ENCODE measurements at regions of chr6 and their contacts with region 1.

Region 1: DNA sequence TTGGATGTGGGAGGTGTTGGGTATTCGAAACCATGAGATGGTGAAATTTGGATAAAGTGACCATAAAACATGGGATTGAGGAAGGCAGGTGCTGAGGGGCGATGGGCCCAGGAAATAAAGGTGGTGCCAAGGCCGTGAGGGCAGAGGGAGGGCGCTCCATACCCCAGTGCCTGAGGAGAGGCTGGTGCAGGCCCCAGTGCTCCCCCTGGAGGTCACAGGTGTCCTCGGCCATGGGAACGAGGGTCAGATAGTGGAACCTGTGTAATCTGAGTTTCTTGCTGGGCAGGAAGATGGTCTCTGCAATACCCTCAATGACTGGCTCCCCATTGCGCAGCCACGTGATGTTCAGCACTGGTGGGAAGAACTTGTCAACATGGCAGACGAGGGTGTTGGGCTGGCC is 16.2 kb downstream of the HLA-DPB1 start:
- DNase-seq: peak in 1 of 2 experiments; percentile 15
- ATAC-seq: peak; percentile 66 to 76; a peak in 3 of 6 replicates
- H3K4me3 ChIP-seq: no peak overlapping the region
- H3K27ac ChIP-seq: no peak overlapping the region
- H3K4me1 ChIP-seq: no peaks in the 10 kb centered on the region
- CTCF ChIP-seq: no peak
- EP300 ChIP-seq: no peak
- POLR2A ChIP-seq: no peak
- RAD21 ChIP-seq: peak in 1 of 2 experiments; percentile 17; a peak in 1 of 5 replicates

Region 2: GRCh38 chr6:33105916-33106871 is 14.2 kb after region 1 on chr6:
- CTCF ChIA-PET with region 1: no interaction called
- POLR2A ChIA-PET with region 1: no interaction called
- DNase-seq: no peak
- ATAC-seq: no peak
- H3K4me3 ChIP-seq: no peak overlapping the region
- H3K27ac ChIP-seq: no peak overlapping the region
- H3K4me1 ChIP-seq: no peaks in the 10 kb centered on the region
- CTCF ChIP-seq: no peak
- EP300 ChIP-seq: no peak
- POLR2A ChIP-seq: no peak
- RAD21 ChIP-seq: no peak

Region 3: GRCh38 chr6:33118525-33119123 is 26.7 kb after region 1 on chr6:
- CTCF ChIA-PET with region 1: interaction called, 10 read pairs
- POLR2A ChIA-PET with region 1: no interaction called
- DNase-seq: peak in 1 of 2 experiments; percentile 46
- ATAC-seq: peak in 1 of 2 experiments; percentile 47; a peak in 2 of 6 replicates
- H3K4me3 ChIP-seq: no peak overlapping the region
- H3K27ac ChIP-seq: no peak overlapping the region
- H3K4me1 ChIP-seq: no peaks in the 10 kb centered on the region
- CTCF ChIP-seq: peak; percentile 61
- EP300 ChIP-seq: no peak
- POLR2A ChIP-seq: no peak
- RAD21 ChIP-seq: peak; percentile 40 to 46; a peak in 3 of 5 replicates

Region 4: DNA sequence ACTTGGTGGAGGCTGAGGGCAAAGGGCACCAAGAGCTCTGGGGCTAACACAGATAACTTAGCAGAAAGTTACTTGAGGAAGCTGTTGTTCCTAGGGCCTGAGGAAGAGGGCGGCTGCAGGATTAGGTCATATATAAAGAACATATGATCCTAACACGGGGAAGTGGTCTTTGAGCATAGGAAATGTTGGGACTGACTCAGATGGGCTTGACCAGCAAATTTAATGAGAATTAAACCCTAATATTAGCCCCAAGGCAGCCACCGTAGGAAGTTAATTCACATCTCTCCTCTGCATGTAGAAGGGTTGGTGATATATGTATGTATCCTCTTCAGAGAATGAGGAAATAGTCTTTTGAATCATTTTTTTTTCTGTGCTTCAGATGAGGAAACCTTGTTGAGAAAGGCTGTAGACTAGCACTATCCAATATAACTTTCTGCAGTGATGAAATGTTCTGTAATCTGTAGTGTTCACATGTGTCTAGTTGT is 353.2 kb after region 1 on chr6:
- CTCF ChIA-PET with region 1: no interaction called
- POLR2A ChIA-PET with region 1: no interaction called
- DNase-seq: no peak
- ATAC-seq: no peak
- H3K4me3 ChIP-seq: no peak overlapping the region
- H3K27ac ChIP-seq: no peak overlapping the region
- H3K4me1 ChIP-seq: no peaks in the 10 kb centered on the region
- CTCF ChIP-seq: no peak
- EP300 ChIP-seq: no peak
- POLR2A ChIP-seq: no peak
- RAD21 ChIP-seq: no peak